ENCODE measurements at regions of chr22 and their contacts with region 1.

Region 1: DNA sequence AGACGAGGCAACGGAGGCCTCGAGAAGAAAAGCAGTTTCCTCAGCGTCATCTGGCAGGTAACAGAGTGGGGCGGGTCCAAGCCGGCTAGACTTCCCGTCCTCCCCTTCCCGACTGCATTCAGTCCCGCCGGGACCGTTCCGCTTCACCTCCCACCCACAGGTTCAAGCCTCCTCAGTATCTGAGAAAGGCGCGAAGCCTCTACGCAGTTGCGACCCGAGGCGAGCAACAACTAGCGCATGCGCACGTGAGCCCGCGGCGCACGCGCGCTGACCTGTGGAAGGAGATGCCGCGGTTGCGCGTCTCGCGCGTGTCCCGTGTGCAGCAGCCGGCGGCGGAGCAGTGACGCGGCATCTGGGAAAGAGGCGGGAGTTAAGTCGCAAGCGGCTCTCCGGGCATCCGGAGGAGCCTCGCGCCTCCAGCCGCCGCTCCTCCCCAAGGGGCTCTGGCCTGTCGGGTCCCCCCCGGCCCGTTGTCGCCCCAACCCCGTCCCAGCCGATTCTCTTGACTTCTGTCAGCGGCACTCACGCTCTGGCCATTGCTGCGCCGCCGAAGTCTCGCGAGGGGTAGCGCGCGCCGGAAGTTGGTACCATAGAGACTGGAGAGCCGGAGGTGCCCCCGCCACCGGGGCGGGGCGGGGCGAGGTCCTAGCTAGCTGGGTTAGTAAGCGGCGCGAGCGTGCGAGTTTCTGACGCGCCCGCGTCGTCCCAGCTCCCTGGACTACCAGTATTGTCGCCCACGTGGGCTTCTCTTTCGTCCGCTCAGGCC is at the start of gene THAP7:
- DNase-seq: peak; percentile 100
- ATAC-seq: peak; percentile 91
- H3K4me3 ChIP-seq: peak within 1 kb of the TSS; percentile 58
- H3K27ac ChIP-seq: peak within 1 kb of the TSS; percentile 87
- H3K4me1 ChIP-seq: peaks cover 25 to 76% of the 10 kb centered on the region in 2 experiments
- H3K27me3 ChIP-seq: no peaks in the 10 kb centered on the region
- CTCF ChIP-seq: peak in 2 of 3 experiments; percentile 8 to 17; a peak in 2 of 6 replicates
- EP300 ChIP-seq: peak; percentile 60
- POLR2A ChIP-seq: no peak
- RAD21 ChIP-seq: peak; percentile 39 to 44; a peak in 2 of 4 replicates
- polyA plus RNA-seq, gene THAP7: 7.9 to 33.1 TPM

Region 2: DNA sequence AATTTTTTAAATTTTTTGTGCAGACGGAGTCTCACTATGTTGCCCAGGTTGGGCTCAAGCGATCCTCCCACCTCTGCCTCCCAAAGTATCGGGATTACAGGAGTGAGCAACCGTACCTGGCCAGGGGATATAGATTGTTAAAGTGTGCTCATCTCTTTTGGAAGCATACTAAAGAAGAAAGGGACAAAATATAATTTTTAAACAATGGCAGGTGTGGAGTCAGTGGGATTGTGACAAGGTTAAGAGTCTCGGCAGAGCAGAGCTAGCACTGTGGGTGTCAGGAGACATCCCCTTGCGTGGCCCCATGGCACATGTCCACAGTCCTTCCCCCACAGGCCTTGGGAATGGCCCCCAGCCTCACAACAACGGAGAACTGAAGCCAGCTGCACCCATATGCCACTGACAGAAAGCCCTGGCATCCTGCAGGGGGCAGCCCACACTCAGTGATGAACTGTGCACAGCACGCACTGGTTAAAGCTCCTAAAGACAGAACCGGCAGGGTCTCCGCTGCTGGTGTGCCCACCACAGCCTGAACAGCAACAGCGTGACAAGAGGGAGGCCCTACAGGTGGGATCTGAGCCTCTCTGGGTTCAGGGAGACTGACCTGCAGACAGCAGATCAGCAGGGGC is 197.9 kb before region 1 on chr22:
- CTCF ChIA-PET with region 1: no interaction called
- POLR2A ChIA-PET with region 1: interaction called, 3 read pairs
- in situ Hi-C with region 1: no loop called
- intact Hi-C with region 1: loop called (anchors 5 kb)
- DNase-seq: peak; percentile 78 to 84 (median 84)
- ATAC-seq: peak; percentile 89
- H3K4me3 ChIP-seq: no peak overlapping the region
- H3K27ac ChIP-seq: no peak overlapping the region
- H3K4me1 ChIP-seq: peaks cover 3 to 13% of the 10 kb centered on the region in 2 experiments; a peak in 3 of 5 replicates
- H3K27me3 ChIP-seq: no peaks in the 10 kb centered on the region
- CTCF ChIP-seq: peak; percentile 94 to 100 (median 98)
- EP300 ChIP-seq: no peak
- POLR2A ChIP-seq: no peak
- RAD21 ChIP-seq: peak; percentile 95 to 99

Region 3: DNA sequence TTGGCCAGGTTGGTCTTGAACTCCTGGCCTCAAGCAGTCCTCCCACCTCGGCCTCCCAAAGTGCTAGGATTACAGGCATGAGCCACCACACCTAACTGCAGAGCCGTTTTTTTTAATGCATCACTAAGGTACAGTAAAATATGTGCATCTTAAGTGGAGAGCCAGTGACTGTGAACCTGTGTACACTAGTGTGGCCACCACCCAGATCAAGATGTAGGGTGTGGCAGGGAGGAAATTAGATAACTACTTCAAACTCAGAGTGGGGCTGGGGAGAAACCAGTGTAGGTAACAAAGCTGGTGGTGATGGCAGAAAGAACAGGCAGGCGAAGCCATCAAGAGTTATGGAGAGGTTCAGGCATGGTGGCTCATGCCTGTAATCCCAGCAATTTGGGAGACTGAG is 128.5 kb before region 1 on chr22:
- CTCF ChIA-PET with region 1: no interaction called
- POLR2A ChIA-PET with region 1: no interaction called
- in situ Hi-C with region 1: no loop called
- intact Hi-C with region 1: no loop called
- DNase-seq: peak in 2 of 4 experiments; percentile 35 to 45
- ATAC-seq: peak; percentile 50
- H3K4me3 ChIP-seq: no peak overlapping the region
- H3K27ac ChIP-seq: no peak overlapping the region
- H3K4me1 ChIP-seq: peaks cover 10 to 20% of the 10 kb centered on the region in 2 experiments
- H3K27me3 ChIP-seq: no peaks in the 10 kb centered on the region
- CTCF ChIP-seq: no peak
- EP300 ChIP-seq: no peak
- POLR2A ChIP-seq: no peak
- RAD21 ChIP-seq: no peak

Region 4: GRCh38 chr22:20916983-20917810 is 84.5 kb before region 1 on chr22 and contains the start of gene CRKL:
- CTCF ChIA-PET with region 1: no interaction called
- POLR2A ChIA-PET with region 1: interaction called, 11 read pairs
- in situ Hi-C with region 1: no loop called
- intact Hi-C with region 1: loop called (anchors 1 kb)
- DNase-seq: peak; percentile 100
- ATAC-seq: peak; percentile 93
- H3K4me3 ChIP-seq: peak within 1 kb of the TSS; percentile 67
- H3K27ac ChIP-seq: peak within 1 kb of the TSS; percentile 89
- H3K4me1 ChIP-seq: peaks cover 20 to 41% of the 10 kb centered on the region in 2 experiments
- H3K27me3 ChIP-seq: no peaks in the 10 kb centered on the region
- CTCF ChIP-seq: peak; percentile 99 to 100 (median 100)
- EP300 ChIP-seq: peak; percentile 88
- POLR2A ChIP-seq: no peak
- RAD21 ChIP-seq: no peak
- polyA plus RNA-seq, gene CRKL: 100 to 105 TPM

Region 5: GRCh38 chr22:20981787-20982562 is 19.8 kb before region 1 on chr22 and contains the start of gene LZTR1:
- CTCF ChIA-PET with region 1: interaction called, 4 read pairs
- POLR2A ChIA-PET with region 1: interaction called, 451 read pairs
- in situ Hi-C with region 1: no loop called
- intact Hi-C with region 1: loop called (anchors 1 kb)
- DNase-seq: peak; percentile 99 to 100 (median 100)
- ATAC-seq: peak; percentile 96
- H3K4me3 ChIP-seq: peak within 1 kb of the TSS; percentile 54
- H3K27ac ChIP-seq: peak within 1 kb of the TSS; percentile 86
- H3K4me1 ChIP-seq: peaks cover 19 to 48% of the 10 kb centered on the region in 2 experiments
- H3K27me3 ChIP-seq: peaks cover 3 to 9% of the 10 kb centered on the region in 2 experiments; a peak in 3 of 5 replicates
- CTCF ChIP-seq: peak; percentile 99 to 100 (median 99)
- EP300 ChIP-seq: no peak
- POLR2A ChIP-seq: no peak
- RAD21 ChIP-seq: peak; percentile 97
- polyA plus RNA-seq, gene LZTR1: 2.2 to 3.1 TPM

Region 6: GRCh38 chr22:21020802-21021429 is 19.2 kb after region 1 on chr22:
- CTCF ChIA-PET with region 1: interaction called, 3 read pairs
- POLR2A ChIA-PET with region 1: interaction called, 333 read pairs
- in situ Hi-C with region 1: no loop called
- intact Hi-C with region 1: loop called (anchors 1 kb)
- DNase-seq: peak; percentile 85 to 98 (median 96)
- ATAC-seq: peak; percentile 88
- H3K4me3 ChIP-seq: no peak overlapping the region
- H3K27ac ChIP-seq: no peak overlapping the region
- H3K4me1 ChIP-seq: peaks cover 7 to 31% of the 10 kb centered on the region in 2 experiments
- H3K27me3 ChIP-seq: peaks cover 3 to 16% of the 10 kb centered on the region in 2 experiments; a peak in 4 of 5 replicates
- CTCF ChIP-seq: peak; percentile 94 to 97 (median 97)
- EP300 ChIP-seq: no peak
- POLR2A ChIP-seq: no peak
- RAD21 ChIP-seq: peak in 1 of 2 experiments; percentile 93; a peak in 3 of 4 replicates

Region 7: DNA sequence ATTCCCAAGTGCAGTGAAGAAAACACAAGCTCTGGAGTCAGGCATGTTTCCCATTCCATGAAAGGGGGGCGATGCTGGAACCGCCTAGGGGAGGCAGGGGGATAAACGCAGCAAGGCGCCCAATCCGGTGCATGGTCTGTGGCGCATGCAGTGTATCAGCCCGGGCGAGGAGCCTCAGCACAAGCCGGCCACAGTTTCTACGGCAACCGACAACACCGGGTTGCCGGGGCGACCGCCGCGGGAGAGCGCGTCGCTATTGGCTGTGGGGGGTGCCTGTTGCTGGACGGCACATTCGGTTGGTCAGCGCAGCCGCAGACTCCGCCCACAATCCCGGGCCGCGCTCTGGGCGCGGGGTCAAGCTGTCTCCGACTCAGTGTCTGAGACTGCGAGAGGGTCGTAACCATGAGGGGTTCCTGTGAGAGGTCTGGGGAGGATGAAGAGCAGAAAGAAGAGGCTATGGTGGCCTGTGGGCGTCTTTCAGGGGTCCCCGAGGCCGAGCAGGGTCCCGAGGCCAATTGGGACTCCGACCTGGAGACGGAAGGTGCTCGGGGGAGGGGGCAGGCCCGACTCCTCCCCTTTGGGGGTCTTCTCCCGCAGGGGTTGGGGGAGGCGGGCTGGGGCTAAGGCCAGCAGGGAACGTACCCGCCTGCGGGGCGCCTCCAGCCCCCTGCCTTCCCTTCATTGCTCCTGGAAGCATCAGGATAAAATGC is 44.0 kb after region 1 on chr22 and contains the start of gene LRRC74B:
- CTCF ChIA-PET with region 1: no interaction called
- POLR2A ChIA-PET with region 1: interaction called, 44 read pairs
- in situ Hi-C with region 1: no loop called
- intact Hi-C with region 1: no loop called
- DNase-seq: peak; percentile 99 to 100 (median 100)
- ATAC-seq: peak; percentile 99
- H3K4me3 ChIP-seq: peak within 1 kb of the TSS; percentile 5; the same call in 1 of the 2 replicates
- H3K27ac ChIP-seq: no peak within 1 kb of the TSS
- H3K4me1 ChIP-seq: peaks cover 19 to 33% of the 10 kb centered on the region in 2 experiments
- H3K27me3 ChIP-seq: peaks cover 25 to 59% of the 10 kb centered on the region in 2 experiments; a peak in 4 of 5 replicates
- CTCF ChIP-seq: no peak
- EP300 ChIP-seq: no peak
- POLR2A ChIP-seq: no peak
- RAD21 ChIP-seq: no peak; a peak in 1 of 4 replicates
- polyA plus RNA-seq, gene LRRC74B: not detected